ENCODE measurements at regions of chr19 and their contacts with region 1.

Region 1: GRCh38 chr19:46728693-46729676 is 12.1 kb upstream of the PRKD2 start:
- DNase-seq: peak; percentile 80
- ATAC-seq: peak; percentile 87
- H3K4me3 Mint-ChIP-seq: no peak overlapping the region
- H3K27ac Mint-ChIP-seq: peak overlapping the region; percentile 59; the same call in 1 of the 2 replicates
- H3K4me1 Mint-ChIP-seq: peaks cover 14% of the 10 kb centered on the region
- H3K27me3 Mint-ChIP-seq: no peaks in the 10 kb centered on the region; the same call in 1 of the 2 replicates
- CTCF ChIP-seq: peak; percentile 79

Region 2: GRCh38 chr19:46704379-46705076 is 24.5 kb before region 1 on chr19:
- CTCF ChIA-PET with region 1: interaction called, 20 read pairs
- POLR2A ChIA-PET with region 1: no interaction called
- DNase-seq: peak; percentile 96
- ATAC-seq: peak; percentile 94
- H3K4me3 Mint-ChIP-seq: no peak overlapping the region
- H3K27ac Mint-ChIP-seq: peak overlapping the region; percentile 68; the same call in 1 of the 2 replicates
- H3K4me1 Mint-ChIP-seq: no peaks in the 10 kb centered on the region
- H3K27me3 Mint-ChIP-seq: no peaks in the 10 kb centered on the region
- CTCF ChIP-seq: peak; percentile 100

Region 3: GRCh38 chr19:46710687-46711086 is 18.3 kb before region 1 on chr19:
- CTCF ChIA-PET with region 1: interaction called, 16 read pairs
- POLR2A ChIA-PET with region 1: no interaction called
- DNase-seq: peak; percentile 83
- ATAC-seq: peak; percentile 81
- H3K4me3 Mint-ChIP-seq: no peak overlapping the region
- H3K27ac Mint-ChIP-seq: peak overlapping the region; percentile 95
- H3K4me1 Mint-ChIP-seq: peaks cover 16% of the 10 kb centered on the region
- H3K27me3 Mint-ChIP-seq: no peaks in the 10 kb centered on the region
- CTCF ChIP-seq: no peak

Region 4: DNA sequence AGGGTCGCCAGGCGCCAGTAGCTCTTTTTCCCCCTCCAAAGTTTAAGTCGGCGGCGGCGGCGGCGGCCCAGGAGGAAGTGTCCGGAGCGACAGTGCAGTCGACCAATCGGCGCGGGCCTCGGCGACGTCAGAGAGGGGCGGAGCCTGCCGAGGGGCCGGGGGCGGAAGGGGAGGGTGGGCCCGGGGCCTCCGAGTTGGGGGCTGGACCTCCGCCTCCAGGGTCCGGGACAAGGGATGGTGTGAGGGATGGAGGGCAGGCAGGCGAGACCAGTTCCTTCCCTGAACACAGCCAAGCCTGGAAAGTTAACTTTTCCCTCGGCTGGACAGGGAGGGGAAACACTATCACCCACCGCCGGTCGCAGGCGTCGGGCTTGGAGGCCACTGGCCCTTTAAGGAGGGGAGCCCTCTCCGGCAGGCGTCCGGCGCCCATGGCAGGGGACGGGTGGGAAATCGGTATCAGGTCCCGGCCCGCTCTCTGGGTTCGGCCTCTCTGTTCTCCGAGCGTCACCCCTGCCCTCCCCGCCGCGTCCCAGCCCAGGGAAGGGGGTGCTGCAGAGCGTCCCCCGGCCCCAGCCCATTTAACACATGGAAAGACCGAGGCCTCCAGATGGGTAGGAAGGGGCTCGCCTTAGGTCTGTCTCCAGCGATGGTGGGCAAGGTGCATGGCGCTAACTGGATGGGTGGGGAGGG is 11.8 kb before region 1 on chr19 and contains the start of gene PRKD2:
- CTCF ChIA-PET with region 1: interaction called, 11 read pairs
- POLR2A ChIA-PET with region 1: no interaction called
- DNase-seq: peak; percentile 97
- ATAC-seq: peak; percentile 62
- H3K4me3 Mint-ChIP-seq: peak within 1 kb of the TSS; percentile 95
- H3K27ac Mint-ChIP-seq: peak within 1 kb of the TSS; percentile 94
- H3K4me1 Mint-ChIP-seq: peaks cover 18% of the 10 kb centered on the region
- H3K27me3 Mint-ChIP-seq: no peaks in the 10 kb centered on the region
- CTCF ChIP-seq: no peak
- total RNA-seq, gene PRKD2: 78.5 to 100 TPM (median 81.5 TPM) in 3 replicates

Region 5: DNA sequence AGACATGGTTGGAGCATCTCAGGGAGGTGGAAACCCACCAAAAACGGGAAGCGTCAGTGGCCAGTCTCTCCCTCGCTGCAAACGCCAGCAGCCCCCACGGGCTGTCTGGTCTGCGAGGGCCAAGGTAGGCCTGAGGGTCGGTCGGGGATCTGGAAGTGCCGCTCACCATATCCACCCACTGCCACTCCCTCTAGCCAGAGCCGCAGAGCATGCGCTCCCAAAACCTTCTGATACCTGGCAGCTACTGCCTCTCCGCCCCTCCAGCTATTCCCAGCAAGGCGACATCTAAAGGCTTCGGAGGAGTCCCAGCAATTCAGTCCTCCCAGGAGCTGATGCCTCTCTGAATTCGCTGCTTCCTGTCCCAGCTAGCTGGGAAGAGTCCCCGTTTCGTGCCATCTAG is 12.5 kb after region 1 on chr19:
- CTCF ChIA-PET with region 1: interaction called, 26 read pairs
- POLR2A ChIA-PET with region 1: no interaction called
- DNase-seq: no peak
- ATAC-seq: peak; percentile 8; the same call in 1 of the 2 replicates
- H3K4me3 Mint-ChIP-seq: no peak overlapping the region
- H3K27ac Mint-ChIP-seq: peak overlapping the region; percentile 43; the same call in 1 of the 2 replicates
- H3K4me1 Mint-ChIP-seq: peaks cover 39% of the 10 kb centered on the region
- H3K27me3 Mint-ChIP-seq: no peaks in the 10 kb centered on the region
- CTCF ChIP-seq: no peak

Region 6: DNA sequence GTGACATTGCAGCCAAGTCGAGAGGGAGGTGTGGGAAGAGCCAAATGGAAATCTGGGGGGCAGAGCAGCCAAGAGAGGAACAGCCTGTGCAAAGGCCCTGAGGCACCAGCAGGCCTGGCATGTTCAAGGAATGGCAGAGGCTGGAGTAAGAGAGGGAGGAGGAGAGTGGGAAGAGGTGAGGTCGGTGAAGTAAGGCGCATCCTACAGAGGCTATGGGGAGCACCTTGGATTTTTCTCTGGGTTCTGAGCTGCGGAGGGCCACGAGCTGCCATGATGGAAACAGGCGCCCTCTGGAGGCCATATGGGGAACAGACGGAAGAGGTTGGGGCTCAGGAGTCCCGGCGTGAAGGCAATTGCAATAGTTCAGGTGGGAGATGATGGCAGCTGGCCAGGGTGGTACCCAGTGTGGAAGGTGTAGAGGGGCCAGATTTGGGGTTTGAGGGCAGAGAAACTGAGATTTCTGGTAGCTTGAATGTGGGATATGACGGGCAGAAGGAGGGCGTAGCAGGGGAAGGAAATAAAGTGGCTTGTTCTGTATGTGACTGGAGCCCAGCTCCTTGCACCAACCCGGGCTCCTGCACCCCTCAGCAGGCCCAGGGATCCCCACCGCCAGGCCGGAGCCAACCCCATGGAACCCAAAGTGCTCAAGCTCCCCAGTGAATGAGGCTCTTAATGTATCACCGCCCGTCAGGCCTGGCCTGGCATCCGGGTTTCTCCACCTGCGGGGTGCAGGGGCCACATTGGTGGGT is 37.8 kb after region 1 on chr19:
- CTCF ChIA-PET with region 1: interaction called, 16 read pairs
- POLR2A ChIA-PET with region 1: no interaction called
- DNase-seq: peak; percentile 78
- ATAC-seq: peak; percentile 93
- H3K4me3 Mint-ChIP-seq: no peak overlapping the region
- H3K27ac Mint-ChIP-seq: peak overlapping the region; percentile 83; the same call in 1 of the 2 replicates
- H3K4me1 Mint-ChIP-seq: no peaks in the 10 kb centered on the region; the same call in 1 of the 2 replicates
- H3K27me3 Mint-ChIP-seq: no peaks in the 10 kb centered on the region
- CTCF ChIP-seq: peak; percentile 71

Region 7: DNA sequence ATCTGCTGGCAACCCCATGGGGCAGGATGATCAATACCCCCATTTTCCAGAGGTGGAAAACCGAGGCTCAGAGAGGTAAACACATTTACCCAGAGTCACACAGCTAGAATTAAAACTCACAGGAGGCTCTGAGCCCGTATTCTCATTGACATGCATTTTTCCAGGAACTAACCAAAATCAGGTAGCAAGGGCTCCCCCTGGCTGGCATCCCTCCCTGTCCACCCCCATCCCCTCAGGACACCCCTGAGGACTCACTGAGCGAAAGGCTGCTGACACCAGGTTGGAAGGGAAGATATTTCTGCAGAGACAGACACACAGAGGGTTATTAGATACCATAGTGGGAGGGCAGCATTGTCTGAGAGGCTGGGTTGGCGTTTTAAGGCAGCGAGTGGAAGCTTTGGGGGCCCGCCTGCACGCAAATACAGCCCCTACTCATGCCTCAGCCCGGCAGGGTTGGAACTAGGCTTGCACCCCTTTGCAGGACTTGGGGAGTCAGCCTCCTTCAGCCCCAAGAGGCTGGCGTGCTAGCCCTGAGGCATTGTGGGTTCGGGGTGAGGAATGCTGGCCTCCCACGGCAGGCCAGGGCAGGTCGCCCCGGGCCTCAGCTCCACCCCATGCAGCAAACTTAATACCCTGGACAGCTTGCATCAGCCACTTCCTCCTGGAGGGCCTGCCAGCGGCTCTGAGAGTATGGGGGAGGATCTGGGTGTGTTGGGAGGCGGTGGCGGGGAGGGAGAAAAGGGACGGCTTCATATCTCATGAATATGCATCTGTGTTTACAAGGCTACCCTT is 55.5 kb after region 1 on chr19:
- CTCF ChIA-PET with region 1: no interaction called
- POLR2A ChIA-PET with region 1: no interaction called
- DNase-seq: peak; percentile 82
- ATAC-seq: peak; percentile 39
- H3K4me3 Mint-ChIP-seq: peak overlapping the region; percentile 95
- H3K27ac Mint-ChIP-seq: peak overlapping the region; percentile 92
- H3K4me1 Mint-ChIP-seq: peaks cover 45% of the 10 kb centered on the region
- H3K27me3 Mint-ChIP-seq: peaks cover 8% of the 10 kb centered on the region
- CTCF ChIP-seq: no peak

Measured in WTC11 (cell line).